CD8-positive, alpha-beta T cell (primary cell): ENCODE measurements at regions of chr17 and their contacts with region 1.

Region 1: DNA sequence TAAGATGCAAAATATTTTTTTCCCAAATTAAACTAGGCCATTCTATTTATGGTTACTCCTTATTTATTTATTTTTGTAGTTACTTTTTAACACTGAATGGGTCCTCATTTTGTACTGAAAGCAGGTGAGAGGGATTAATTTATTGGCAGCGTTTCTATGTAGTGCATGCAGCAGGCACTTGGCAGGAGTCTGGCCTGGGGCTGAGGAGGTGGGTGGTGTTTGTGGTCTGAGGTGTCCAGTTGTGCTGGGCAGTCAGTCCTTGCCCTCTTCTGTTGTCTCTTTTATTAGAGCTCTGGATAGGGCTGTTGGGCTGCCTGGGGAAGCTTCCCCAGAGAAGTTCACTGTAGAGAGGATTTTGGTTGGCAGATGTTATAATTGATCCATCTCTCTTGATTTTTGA is 12.7 kb downstream of the SEC14L1 start:
- DNase-seq: no peak
- ATAC-seq: no peak
- H3K4me3 ChIP-seq: no peak overlapping the region
- H3K4me3 Mint-ChIP-seq: no peak overlapping the region
- H3K27ac ChIP-seq: no peak overlapping the region
- H3K27ac Mint-ChIP-seq: peak overlapping the region; percentile 14
- H3K4me1 ChIP-seq: no peaks in the 10 kb centered on the region
- H3K4me1 Mint-ChIP-seq: peaks cover 53% of the 10 kb centered on the region
- H3K27me3 ChIP-seq: no peaks in the 10 kb centered on the region
- H3K27me3 Mint-ChIP-seq: no peaks in the 10 kb centered on the region
- CTCF ChIP-seq: no peak

Region 2: GRCh38 chr17:76968707-76969597 is 184.5 kb before region 1 on chr17:
- CTCF ChIA-PET with region 1: no interaction called
- POLR2A ChIA-PET with region 1: no interaction called
- intact Hi-C with region 1: no loop called
- DNase-seq: peak; percentile 18 to 78 (median 55)
- ATAC-seq: peak; percentile 84
- H3K4me3 ChIP-seq: peak overlapping the region; percentile 52 to 59
- H3K4me3 Mint-ChIP-seq: peak overlapping the region; percentile 85
- H3K27ac ChIP-seq: peak overlapping the region in 1 of 2 experiments; percentile 37
- H3K27ac Mint-ChIP-seq: peak overlapping the region; percentile 79
- H3K4me1 ChIP-seq: peaks cover 11% of the 10 kb centered on the region
- H3K4me1 Mint-ChIP-seq: peaks cover 20% of the 10 kb centered on the region
- H3K27me3 ChIP-seq: peaks cover 0 to 8% of the 10 kb centered on the region in 2 experiments
- H3K27me3 Mint-ChIP-seq: no peaks in the 10 kb centered on the region
- CTCF ChIP-seq: no peak

Region 3: DNA sequence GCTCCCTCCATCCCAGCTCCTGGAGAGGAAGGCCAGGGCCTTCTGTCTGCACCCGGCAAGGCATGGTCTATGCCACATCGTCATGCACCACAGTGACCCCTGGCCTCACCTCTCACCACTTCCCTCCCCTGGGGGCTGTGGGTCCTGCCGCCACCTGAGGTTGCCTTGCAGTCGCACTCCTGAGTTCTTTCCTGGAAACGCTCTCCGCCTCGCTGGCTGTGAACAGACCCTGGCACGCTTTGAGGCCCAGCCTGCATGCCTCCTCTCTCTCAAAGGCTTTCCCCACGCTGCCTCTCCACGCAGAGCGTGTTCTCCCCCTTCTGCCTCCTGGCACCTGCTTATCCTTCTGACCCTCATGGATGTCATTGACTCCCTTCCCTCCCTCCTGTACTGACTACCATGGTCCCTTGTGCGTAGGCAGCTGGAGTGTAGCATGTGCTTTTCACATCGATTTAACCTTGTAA is 32.7 kb after region 1 on chr17:
- CTCF ChIA-PET with region 1: no interaction called
- POLR2A ChIA-PET with region 1: no interaction called
- intact Hi-C with region 1: loop called in 1 of 2 experiments (anchors 5 kb)
- DNase-seq: peak in 5 of 9 experiments; percentile 22 to 51 (median 33)
- ATAC-seq: peak; percentile 28
- H3K4me3 ChIP-seq: no peak overlapping the region
- H3K4me3 Mint-ChIP-seq: no peak overlapping the region
- H3K27ac ChIP-seq: no peak overlapping the region
- H3K27ac Mint-ChIP-seq: no peak overlapping the region
- H3K4me1 ChIP-seq: peaks cover 58% of the 10 kb centered on the region
- H3K4me1 Mint-ChIP-seq: peaks cover 51% of the 10 kb centered on the region
- H3K27me3 ChIP-seq: no peaks in the 10 kb centered on the region
- H3K27me3 Mint-ChIP-seq: no peaks in the 10 kb centered on the region
- CTCF ChIP-seq: no peak